A549 (cell line): ENCODE measurements at regions of chr1 and their contacts with region 1.

Region 1: GRCh38 chr1:35202048-35202719 is 9.2 kb upstream of the SFPQ start:
- DNase-seq: peak; percentile 80 to 81
- ATAC-seq: peak; percentile 98 to 99
- H3K4me3 ChIP-seq: peak overlapping the region; percentile 31; the same call in 1 of the 3 replicates
- H3K27ac ChIP-seq: peak overlapping the region; percentile 57 to 58; a peak in 4 of 6 replicates
- H3K4me1 ChIP-seq: no peaks in the 10 kb centered on the region
- CTCF ChIP-seq: peak; percentile 76
- EP300 ChIP-seq: no peak
- POLR2A ChIP-seq: no peak
- RAD21 ChIP-seq: peak; percentile 62 to 73

Region 2: DNA sequence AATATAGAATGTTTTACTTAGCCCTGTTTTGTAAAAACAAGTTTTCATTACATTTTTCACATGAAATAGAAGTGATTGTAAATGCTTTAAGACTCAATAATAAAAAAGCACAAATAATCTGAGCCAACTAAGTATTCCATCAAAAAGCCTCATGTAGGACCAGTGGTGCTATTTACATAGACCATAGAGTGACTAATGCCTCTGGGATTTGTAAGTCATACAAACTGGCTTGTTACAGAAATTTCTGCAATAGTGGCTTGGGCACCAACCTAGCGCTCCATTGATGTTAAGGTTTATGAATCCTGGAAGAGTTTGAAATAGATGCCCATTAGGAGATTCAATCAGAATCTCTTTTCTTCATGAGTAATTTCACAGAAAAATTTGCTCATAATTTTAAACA is 91.1 kb before region 1 on chr1:
- CTCF ChIA-PET with region 1: no interaction called
- POLR2A ChIA-PET with region 1: no interaction called
- DNase-seq: peak; percentile 8 to 23
- ATAC-seq: peak; percentile 56 to 59; a peak in 2 of 6 replicates
- H3K4me3 ChIP-seq: no peak overlapping the region
- H3K27ac ChIP-seq: no peak overlapping the region
- H3K4me1 ChIP-seq: peaks cover 11% of the 10 kb centered on the region
- CTCF ChIP-seq: no peak
- EP300 ChIP-seq: no peak
- POLR2A ChIP-seq: no peak
- RAD21 ChIP-seq: no peak

Region 3: GRCh38 chr1:35298464-35298863 is 96.3 kb after region 1 on chr1:
- CTCF ChIA-PET with region 1: interaction called, 13 read pairs
- POLR2A ChIA-PET with region 1: no interaction called
- DNase-seq: peak; percentile 8 to 28
- ATAC-seq: peak; percentile 70 to 80; a peak in 5 of 6 replicates
- H3K4me3 ChIP-seq: no peak overlapping the region
- H3K27ac ChIP-seq: no peak overlapping the region
- H3K4me1 ChIP-seq: no peaks in the 10 kb centered on the region
- CTCF ChIP-seq: peak; percentile 34; the same call in 2 of the 3 replicates
- EP300 ChIP-seq: no peak
- POLR2A ChIP-seq: no peak
- RAD21 ChIP-seq: peak; percentile 54 to 56

Region 4: DNA sequence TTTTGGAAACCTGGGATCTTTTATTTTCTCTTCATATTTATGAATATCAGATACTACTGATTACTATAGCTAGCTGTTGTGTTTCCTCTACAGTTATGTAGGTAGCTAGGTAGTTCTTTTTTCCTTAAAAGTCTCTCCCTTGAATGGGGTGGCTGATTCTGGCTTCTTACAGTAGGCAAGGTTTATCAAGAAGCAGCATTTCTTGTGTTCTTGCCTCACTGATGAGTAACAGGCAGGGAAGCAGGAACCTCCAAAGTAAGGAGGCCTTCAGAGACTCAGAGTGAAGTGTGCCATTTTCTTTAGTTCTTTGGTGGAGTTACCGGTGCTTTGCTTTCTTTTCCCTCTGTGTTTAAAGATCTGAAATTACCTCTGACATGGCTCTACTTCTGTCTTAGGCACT is 122.3 kb after region 1 on chr1:
- CTCF ChIA-PET with region 1: no interaction called
- POLR2A ChIA-PET with region 1: no interaction called
- DNase-seq: no peak
- ATAC-seq: no peak
- H3K4me3 ChIP-seq: no peak overlapping the region
- H3K27ac ChIP-seq: no peak overlapping the region
- H3K4me1 ChIP-seq: peaks cover 17% of the 10 kb centered on the region
- CTCF ChIP-seq: no peak
- EP300 ChIP-seq: no peak
- POLR2A ChIP-seq: no peak
- RAD21 ChIP-seq: no peak

Region 5: GRCh38 chr1:35461966-35462651 is 259.9 kb after region 1 on chr1:
- CTCF ChIA-PET with region 1: no interaction called
- POLR2A ChIA-PET with region 1: no interaction called
- DNase-seq: no peak
- ATAC-seq: no peak
- H3K4me3 ChIP-seq: no peak overlapping the region
- H3K27ac ChIP-seq: no peak overlapping the region
- H3K4me1 ChIP-seq: no peaks in the 10 kb centered on the region
- CTCF ChIP-seq: no peak
- EP300 ChIP-seq: no peak
- POLR2A ChIP-seq: no peak
- RAD21 ChIP-seq: no peak